Naive thymus-derived CD4-positive, alpha-beta T cell (primary cell): ENCODE measurements at regions of chr3 and their contacts with region 1.

Region 1: DNA sequence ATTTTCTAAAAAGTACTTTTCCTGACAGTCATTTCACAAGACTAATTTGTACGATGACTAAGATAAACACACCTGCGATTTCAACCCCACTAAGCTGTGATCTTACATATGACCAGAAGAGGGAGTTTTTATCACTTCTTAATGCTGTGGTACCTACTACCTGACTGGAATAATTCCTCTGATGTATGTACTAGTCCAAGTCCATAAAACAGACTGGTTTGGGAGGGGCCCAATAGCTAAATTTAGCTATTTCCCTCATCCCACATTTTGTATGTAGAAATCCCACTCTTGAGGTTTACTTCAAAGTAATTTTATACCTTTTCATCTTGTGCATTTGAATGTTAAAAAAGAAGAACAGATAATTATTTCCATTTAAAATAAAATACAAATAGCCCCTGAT is 49.7 kb upstream of the SCAANT1 start:
- DNase-seq: peak in 7 of 9 donors; percentile 47 to 74 (median 63)
- ATAC-seq: peak; percentile 96
- H3K4me3 ChIP-seq: no peak overlapping the region
- H3K4me3 Mint-ChIP-seq: no peak overlapping the region
- H3K27ac ChIP-seq: no peak overlapping the region
- H3K27ac Mint-ChIP-seq: peak overlapping the region in 3 of 9 donors; percentile 20 to 45 (median 41)
- H3K4me1 ChIP-seq: peaks cover 7 to 18% of the 10 kb centered on the region in 2 donors
- H3K4me1 Mint-ChIP-seq: peaks cover 18 to 57% (median 41%) of the 10 kb centered on the region in 7 donors
- H3K27me3 ChIP-seq: no peaks in the 10 kb centered on the region
- H3K27me3 Mint-ChIP-seq: no peaks in the 10 kb centered on the region

Region 2: DNA sequence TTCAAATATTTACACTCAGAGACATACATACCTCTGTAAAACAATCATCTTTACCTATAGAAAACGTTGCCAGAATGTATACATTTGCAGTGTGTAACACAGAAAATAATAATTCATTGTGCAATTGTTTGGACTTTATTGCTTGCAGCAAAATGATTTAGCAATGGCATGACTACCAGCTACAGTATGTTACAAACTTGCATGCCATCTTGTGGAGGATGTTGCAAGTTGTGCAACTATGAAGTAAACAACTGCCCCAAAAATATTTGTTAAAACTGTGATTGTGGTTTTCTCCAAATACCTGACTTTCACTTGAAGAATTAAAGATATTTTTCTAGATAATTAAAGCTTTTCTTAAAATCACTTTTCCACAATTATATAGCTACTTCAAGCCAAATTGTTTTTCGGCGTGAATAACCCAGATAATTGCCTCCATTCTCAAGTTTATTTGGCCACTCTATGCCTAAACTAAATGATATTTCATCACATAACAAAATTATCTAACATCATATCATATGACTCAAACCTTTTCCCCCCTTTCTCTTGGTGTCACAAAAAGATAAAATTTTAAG is 169.8 kb before region 1 on chr3:
- CTCF ChIA-PET with region 1: no interaction called
- POLR2A ChIA-PET with region 1: no interaction called
- intact Hi-C with region 1: no loop called
- DNase-seq: no peak
- ATAC-seq: no peak
- H3K4me3 ChIP-seq: no peak overlapping the region
- H3K4me3 Mint-ChIP-seq: no peak overlapping the region
- H3K27ac ChIP-seq: no peak overlapping the region
- H3K27ac Mint-ChIP-seq: no peak overlapping the region
- H3K4me1 ChIP-seq: no peaks in the 10 kb centered on the region
- H3K4me1 Mint-ChIP-seq: no peaks in the 10 kb centered on the region
- H3K27me3 ChIP-seq: no peaks in the 10 kb centered on the region
- H3K27me3 Mint-ChIP-seq: peaks cover 0 to 6% (median 0%) of the 10 kb centered on the region in 5 donors

Region 3: DNA sequence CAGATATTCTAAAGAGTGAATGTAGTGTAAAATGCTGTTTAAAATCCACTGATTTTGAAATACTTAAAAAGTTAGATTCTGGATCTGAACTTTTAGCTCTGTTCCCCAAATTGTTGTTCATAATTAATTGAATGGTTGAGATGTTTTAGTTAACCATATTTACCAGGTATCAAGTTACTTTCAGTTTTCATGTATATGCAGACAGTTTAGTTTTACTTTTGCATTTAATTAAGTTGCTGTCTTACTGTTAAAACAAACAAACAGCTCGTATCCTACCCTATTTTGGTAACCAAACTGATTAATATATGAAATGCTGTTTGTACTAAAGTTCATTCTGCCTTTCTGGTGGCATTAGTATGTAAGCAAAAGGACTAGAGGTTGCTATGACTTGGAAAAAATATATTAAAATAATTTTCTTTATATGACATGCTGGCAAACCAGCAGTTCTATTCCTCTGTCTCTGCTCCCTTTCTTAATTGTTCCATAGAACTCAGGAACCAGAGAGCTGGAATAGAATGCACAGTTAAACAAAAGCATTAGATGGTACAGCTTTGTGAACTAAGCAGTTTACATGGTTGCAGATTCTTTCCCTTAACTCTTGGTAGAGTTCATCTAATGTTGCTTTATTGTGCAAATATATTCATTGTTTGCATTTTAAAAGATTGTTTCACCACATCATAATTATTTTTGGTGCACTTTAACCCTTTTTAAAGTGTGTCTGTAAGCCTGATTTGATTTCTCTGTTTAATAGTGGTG is 10.2 kb before region 1 on chr3:
- CTCF ChIA-PET with region 1: interaction called, 4 read pairs
- POLR2A ChIA-PET with region 1: interaction called, 3 read pairs
- intact Hi-C with region 1: loop called in 1 of 2 experiments (anchors 1 kb)
- DNase-seq: no peak
- ATAC-seq: no peak
- H3K4me3 ChIP-seq: no peak overlapping the region
- H3K4me3 Mint-ChIP-seq: peak overlapping the region in 6 of 10 donors; percentile 40 to 76 (median 56)
- H3K27ac ChIP-seq: peak overlapping the region; percentile 15
- H3K27ac Mint-ChIP-seq: peak overlapping the region; percentile 8 to 90 (median 50)
- H3K4me1 ChIP-seq: peaks cover 13 to 28% of the 10 kb centered on the region in 2 donors
- H3K4me1 Mint-ChIP-seq: peaks cover 22 to 54% (median 47%) of the 10 kb centered on the region in 7 donors
- H3K27me3 ChIP-seq: no peaks in the 10 kb centered on the region
- H3K27me3 Mint-ChIP-seq: no peaks in the 10 kb centered on the region

Region 4: GRCh38 chr3:63975723-63976122 is 13.8 kb after region 1 on chr3:
- CTCF ChIA-PET with region 1: interaction called, 162 read pairs
- POLR2A ChIA-PET with region 1: interaction called, 234 read pairs
- intact Hi-C with region 1: loop called (anchors 1 kb)
- DNase-seq: no peak
- ATAC-seq: no peak
- H3K4me3 ChIP-seq: no peak overlapping the region
- H3K4me3 Mint-ChIP-seq: peak overlapping the region; percentile 14 to 88 (median 68)
- H3K27ac ChIP-seq: peak overlapping the region; percentile 19
- H3K27ac Mint-ChIP-seq: peak overlapping the region in 8 of 9 donors; percentile 77 to 96 (median 88)
- H3K4me1 ChIP-seq: peaks cover 88% of the 10 kb centered on the region in 2 donors
- H3K4me1 Mint-ChIP-seq: peaks cover 68 to 100% (median 97%) of the 10 kb centered on the region in 7 donors
- H3K27me3 ChIP-seq: no peaks in the 10 kb centered on the region
- H3K27me3 Mint-ChIP-seq: no peaks in the 10 kb centered on the region

Region 5: GRCh38 chr3:63993653-63994079 is 31.8 kb after region 1 on chr3:
- CTCF ChIA-PET with region 1: interaction called, 249 read pairs
- POLR2A ChIA-PET with region 1: interaction called, 50 read pairs
- intact Hi-C with region 1: loop called (anchors 1 kb)
- DNase-seq: peak; percentile 28 to 70 (median 58)
- ATAC-seq: peak; percentile 87
- H3K4me3 ChIP-seq: no peak overlapping the region
- H3K4me3 Mint-ChIP-seq: peak overlapping the region in 4 of 10 donors; percentile 5 to 23 (median 18)
- H3K27ac ChIP-seq: no peak overlapping the region
- H3K27ac Mint-ChIP-seq: peak overlapping the region; percentile 53 to 92 (median 84)
- H3K4me1 ChIP-seq: peaks cover 0 to 10% of the 10 kb centered on the region in 2 donors
- H3K4me1 Mint-ChIP-seq: peaks cover 34 to 79% (median 56%) of the 10 kb centered on the region in 7 donors
- H3K27me3 ChIP-seq: no peaks in the 10 kb centered on the region
- H3K27me3 Mint-ChIP-seq: no peaks in the 10 kb centered on the region

Region 6: GRCh38 chr3:64023187-64023848 is 61.4 kb after region 1 on chr3 and contains the start of gene PSMD6:
- CTCF ChIA-PET with region 1: interaction called, 12 read pairs
- POLR2A ChIA-PET with region 1: interaction called, 5 read pairs
- intact Hi-C with region 1: loop called in 1 of 2 experiments (anchors 1 kb)
- DNase-seq: peak; percentile 87 to 98 (median 93)
- ATAC-seq: peak; percentile 99
- H3K4me3 ChIP-seq: peak within 1 kb of the TSS; percentile 74
- H3K4me3 Mint-ChIP-seq: peak within 1 kb of the TSS; percentile 86 to 92 (median 89)
- H3K27ac ChIP-seq: peak within 1 kb of the TSS; percentile 96
- H3K27ac Mint-ChIP-seq: peak within 1 kb of the TSS; percentile 72 to 95 (median 90)
- H3K4me1 ChIP-seq: peaks cover 17 to 19% of the 10 kb centered on the region in 2 donors
- H3K4me1 Mint-ChIP-seq: peaks cover 18 to 46% (median 40%) of the 10 kb centered on the region in 7 donors
- H3K27me3 ChIP-seq: no peaks in the 10 kb centered on the region
- H3K27me3 Mint-ChIP-seq: peaks cover 7 to 20% (median 16%) of the 10 kb centered on the region in 5 donors
- total RNA-seq, gene PSMD6: 63.4 to 103 (median 84.1) TPM

Region 7: DNA sequence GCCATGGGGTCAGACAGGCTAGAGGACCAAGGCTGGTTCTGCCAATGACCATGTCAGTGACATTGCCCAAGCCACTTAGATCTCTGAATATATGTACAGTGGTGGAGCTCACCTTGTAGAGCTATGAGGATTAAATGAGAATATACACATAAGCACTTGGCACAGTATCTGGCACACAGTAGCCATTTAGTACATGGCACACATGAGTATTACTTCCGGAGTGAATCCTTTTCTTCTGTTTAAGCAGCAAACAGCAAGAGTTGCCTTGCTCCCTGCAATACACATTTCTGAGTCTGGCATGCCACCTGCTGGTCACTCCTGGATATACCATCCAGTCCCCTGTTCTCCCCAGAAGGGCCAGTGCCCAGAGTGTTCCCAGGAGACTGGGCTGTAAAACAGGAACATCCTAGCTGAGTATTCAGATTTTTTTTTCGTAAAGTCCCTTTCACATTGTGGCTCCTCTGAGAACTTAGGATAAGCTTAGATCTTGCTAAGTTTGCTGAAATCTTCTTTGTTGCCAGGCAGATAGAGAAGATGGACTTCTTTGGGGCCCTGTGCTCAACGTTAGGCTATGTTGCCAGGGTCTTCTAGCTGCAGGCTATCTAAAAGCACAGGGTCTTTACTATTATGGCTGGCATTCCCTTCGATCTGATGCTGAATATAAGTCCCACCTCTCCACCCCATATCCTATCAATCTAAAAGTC is 522.5 kb after region 1 on chr3:
- CTCF ChIA-PET with region 1: no interaction called
- POLR2A ChIA-PET with region 1: no interaction called
- intact Hi-C with region 1: loop called in 1 of 2 experiments (anchors 10 kb)
- DNase-seq: peak; percentile 18 to 64 (median 46)
- ATAC-seq: peak; percentile 82
- H3K4me3 ChIP-seq: no peak overlapping the region
- H3K4me3 Mint-ChIP-seq: no peak overlapping the region
- H3K27ac ChIP-seq: no peak overlapping the region
- H3K27ac Mint-ChIP-seq: peak overlapping the region in 1 of 9 donors; percentile 37
- H3K4me1 ChIP-seq: no peaks in the 10 kb centered on the region
- H3K4me1 Mint-ChIP-seq: peaks cover 0 to 10% (median 0%) of the 10 kb centered on the region in 7 donors
- H3K27me3 ChIP-seq: no peaks in the 10 kb centered on the region
- H3K27me3 Mint-ChIP-seq: peaks cover 15 to 22% (median 19%) of the 10 kb centered on the region in 5 donors